CD14-positive monocyte (primary cell): ENCODE measurements at regions of chr19 and their contacts with region 1.

Region 1: DNA sequence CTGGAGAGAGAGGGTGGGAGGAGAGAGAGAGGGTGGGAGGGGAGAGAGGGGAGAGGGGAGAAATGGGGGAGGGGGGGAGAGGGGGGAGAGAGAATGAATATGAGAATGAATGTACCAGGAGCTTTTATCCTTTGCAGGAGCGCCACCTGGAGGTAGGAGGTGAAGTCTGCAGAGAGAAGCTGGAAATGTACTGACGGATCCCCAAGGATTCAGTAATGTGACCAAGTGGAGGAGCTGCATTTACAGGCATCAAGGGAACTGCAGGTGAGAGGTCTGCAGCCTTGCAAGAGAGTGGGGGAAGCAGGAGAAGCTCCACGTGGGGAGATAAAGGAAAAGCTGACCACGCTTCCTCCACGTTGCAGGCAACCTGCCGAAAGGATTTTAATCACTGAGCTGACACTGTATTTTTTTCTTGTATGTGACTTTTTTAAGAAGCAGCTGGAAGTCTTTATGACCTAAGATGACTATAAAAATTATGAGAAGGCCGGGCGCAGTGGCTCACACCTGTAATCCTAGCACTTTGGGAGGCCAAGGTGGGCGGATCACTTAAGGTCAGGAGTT is 33.7 kb downstream of the VSTM1 start:
- DNase-seq: peak; percentile 53 to 71 (median 66)
- H3K4me3 ChIP-seq: peak overlapping the region in 1 of 3 experiments; percentile 27
- H3K4me3 Mint-ChIP-seq: peak overlapping the region in 1 of 2 donors; percentile 83
- H3K27ac ChIP-seq: peak overlapping the region in 1 of 2 donors; percentile 62
- H3K27ac Mint-ChIP-seq: peak overlapping the region in 2 of 7 donors; percentile 86 to 93
- H3K4me1 ChIP-seq: peaks cover 17 to 24% of the 10 kb centered on the region in 2 donors
- H3K4me1 Mint-ChIP-seq: peaks cover 20% of the 10 kb centered on the region
- H3K27me3 ChIP-seq: peaks cover 0 to 6% of the 10 kb centered on the region in 2 donors
- H3K27me3 Mint-ChIP-seq: peaks cover 9 to 15% (median 14%) of the 10 kb centered on the region in 3 donors
- CTCF ChIP-seq: peak; percentile 69

Region 2: DNA sequence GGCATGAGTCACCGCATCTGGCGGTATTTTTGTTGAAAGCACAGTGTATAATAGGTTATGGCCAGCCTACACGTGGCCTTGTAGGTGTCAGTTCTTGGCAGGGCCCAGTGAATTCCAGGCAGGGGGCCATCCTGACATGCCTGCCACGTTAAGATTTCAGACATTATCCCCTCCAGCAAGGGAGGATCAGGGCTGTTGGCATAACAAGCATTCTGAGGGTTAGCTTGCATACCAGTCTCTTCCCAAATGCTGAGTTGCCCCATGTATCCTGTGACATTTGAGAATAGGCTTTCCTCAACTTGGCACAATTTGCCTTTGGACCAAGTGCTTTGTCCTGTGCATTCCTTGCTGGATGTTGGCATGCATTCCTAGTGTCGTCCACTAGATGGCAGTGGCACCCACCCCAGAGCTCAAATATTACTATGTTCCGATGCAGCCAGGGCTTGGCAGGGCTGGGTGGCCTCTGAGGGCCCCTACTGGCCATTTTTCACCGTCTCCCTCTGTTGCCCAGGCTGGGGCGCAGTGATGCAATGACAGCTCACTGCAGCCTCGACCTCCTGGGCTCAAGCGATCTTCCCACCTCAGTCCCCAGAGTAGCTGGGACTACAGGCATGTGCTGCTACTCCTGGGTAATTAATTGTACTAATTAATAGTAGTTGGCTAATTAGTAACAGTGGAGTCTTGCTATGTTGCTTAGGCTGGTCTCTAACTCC is 237.1 kb before region 1 on chr19:
- intact Hi-C with region 1: loop called in 1 of 2 experiments (anchors 2 kb)
- DNase-seq: peak; percentile 84 to 90 (median 89)
- H3K4me3 ChIP-seq: no peak overlapping the region
- H3K4me3 Mint-ChIP-seq: no peak overlapping the region
- H3K27ac ChIP-seq: no peak overlapping the region
- H3K27ac Mint-ChIP-seq: peak overlapping the region in 3 of 7 donors; percentile 11 to 66 (median 62)
- H3K4me1 ChIP-seq: no peaks in the 10 kb centered on the region
- H3K4me1 Mint-ChIP-seq: peaks cover 2% of the 10 kb centered on the region
- H3K27me3 ChIP-seq: no peaks in the 10 kb centered on the region
- H3K27me3 Mint-ChIP-seq: peaks cover 3 to 5% (median 4%) of the 10 kb centered on the region in 3 donors
- CTCF ChIP-seq: peak; percentile 99

Region 3: DNA sequence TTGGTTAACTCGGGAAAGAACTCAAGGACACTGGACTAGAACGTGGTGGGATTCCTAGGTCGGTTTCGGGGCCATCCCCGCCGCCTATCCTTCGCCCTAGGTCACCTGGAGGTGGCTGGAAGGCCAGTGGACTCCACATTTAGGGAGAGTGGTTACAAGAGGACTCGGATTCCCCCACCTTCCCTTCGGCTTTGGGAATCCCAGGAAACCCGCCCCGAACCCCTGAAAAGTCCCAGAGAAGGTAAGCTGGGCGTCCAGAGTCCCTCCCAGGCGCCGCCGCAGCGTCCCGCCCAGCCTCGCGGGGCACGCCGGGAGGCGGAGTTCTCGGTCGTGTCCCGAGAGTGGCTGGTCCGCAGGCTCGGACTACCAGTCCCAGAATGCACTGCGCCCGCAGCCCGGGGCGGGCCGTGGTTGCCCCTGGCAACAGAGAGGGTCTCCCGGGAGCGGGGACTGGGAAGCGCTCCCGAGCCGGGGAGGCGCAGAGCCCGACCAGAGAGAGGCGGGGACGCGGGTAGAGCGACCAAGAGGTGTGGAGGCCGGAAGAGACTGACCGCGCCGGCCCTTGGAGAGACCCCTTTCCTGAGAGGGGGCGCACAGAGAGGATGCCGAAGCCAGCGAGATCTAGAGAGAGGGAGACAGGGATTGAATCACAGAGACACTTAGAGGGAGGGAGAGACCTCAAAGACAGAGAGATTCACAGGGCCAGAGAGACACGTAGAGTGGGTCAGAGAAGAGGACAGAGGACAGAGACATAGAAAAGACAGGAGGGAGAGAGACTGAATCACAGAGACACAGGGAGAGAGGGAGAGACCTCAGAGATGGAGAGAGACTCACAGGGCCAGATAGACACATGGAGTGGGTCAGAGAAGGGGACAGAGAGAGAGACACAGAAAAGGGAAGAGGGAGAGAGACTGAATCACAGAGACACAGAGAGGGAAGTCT is 150.6 kb before region 1 on chr19:
- intact Hi-C with region 1: loop called in 1 of 2 experiments (anchors 10 kb)
- DNase-seq: peak; percentile 59 to 69 (median 67)
- H3K4me3 ChIP-seq: peak overlapping the region; percentile 28 to 79 (median 75)
- H3K4me3 Mint-ChIP-seq: no peak overlapping the region
- H3K27ac ChIP-seq: peak overlapping the region in 1 of 2 donors; percentile 16
- H3K27ac Mint-ChIP-seq: peak overlapping the region in 5 of 7 donors; percentile 6 to 75 (median 70)
- H3K4me1 ChIP-seq: peaks cover 54 to 70% of the 10 kb centered on the region in 2 donors
- H3K4me1 Mint-ChIP-seq: peaks cover 46% of the 10 kb centered on the region
- H3K27me3 ChIP-seq: peaks cover 32 to 40% of the 10 kb centered on the region in 2 donors
- H3K27me3 Mint-ChIP-seq: peaks cover 0 to 29% (median 25%) of the 10 kb centered on the region in 3 donors
- CTCF ChIP-seq: no peak

Region 4: GRCh38 chr19:53906211-53907192 is 123.5 kb before region 1 on chr19:
- intact Hi-C with region 1: loop called (anchors 2 kb)
- DNase-seq: peak; percentile 27 to 59 (median 54)
- H3K4me3 ChIP-seq: no peak overlapping the region
- H3K4me3 Mint-ChIP-seq: peak overlapping the region in 1 of 2 donors; percentile 87
- H3K27ac ChIP-seq: no peak overlapping the region
- H3K27ac Mint-ChIP-seq: peak overlapping the region in 1 of 7 donors; percentile 69
- H3K4me1 ChIP-seq: peaks cover 14 to 24% of the 10 kb centered on the region in 2 donors
- H3K4me1 Mint-ChIP-seq: peaks cover 27% of the 10 kb centered on the region
- H3K27me3 ChIP-seq: peaks cover 32 to 67% of the 10 kb centered on the region in 2 donors
- H3K27me3 Mint-ChIP-seq: peaks cover 66 to 79% (median 68%) of the 10 kb centered on the region in 3 donors
- CTCF ChIP-seq: peak; percentile 99